ENCODE measurements at regions of chr17 and their contacts with region 1.

Region 1: DNA sequence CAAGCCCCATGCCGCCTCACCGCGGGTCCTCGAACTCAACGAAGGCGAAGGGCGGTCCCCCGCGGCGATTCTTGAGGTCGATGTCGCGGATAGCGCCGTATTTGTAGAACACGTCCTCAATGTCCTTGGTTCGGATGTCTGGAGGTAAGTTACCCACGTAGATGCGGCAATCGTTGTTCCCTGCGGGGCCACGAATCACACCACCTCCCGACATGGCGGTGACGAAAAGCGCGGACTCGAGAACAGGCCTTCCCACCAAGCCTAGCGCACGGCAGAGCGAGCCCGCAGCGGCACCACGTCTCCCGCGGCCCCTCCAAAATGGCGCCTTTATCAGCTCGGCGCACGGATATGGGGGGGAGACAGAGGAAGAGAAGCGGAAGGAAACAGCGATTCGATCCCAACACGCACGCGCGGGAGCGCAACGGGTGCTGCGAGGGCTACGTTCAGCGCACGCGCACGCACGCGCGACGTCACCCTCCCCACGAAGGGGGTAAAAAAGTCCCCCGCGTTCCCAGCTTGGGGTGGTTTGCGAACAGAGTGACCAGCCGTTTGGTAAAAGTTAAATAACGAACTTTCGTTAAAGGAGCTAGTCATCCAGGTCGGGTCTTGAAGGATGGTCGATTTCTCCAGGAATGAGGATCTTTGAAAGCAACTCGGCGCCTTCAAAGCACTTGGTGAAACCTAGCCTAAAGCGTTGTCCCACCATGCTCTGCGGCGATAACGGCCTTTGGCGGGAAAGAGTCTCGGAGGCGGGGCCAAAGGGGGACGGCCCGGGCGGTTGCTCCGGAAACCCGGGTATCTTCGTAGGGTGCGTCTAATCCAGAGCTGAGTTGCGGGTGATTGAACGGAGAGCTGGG is at the start of gene SRSF1:
- DNase-seq: peak; percentile 98 to 99 (median 98)
- ATAC-seq: peak; percentile 95 to 98 (median 96)
- H3K4me3 ChIP-seq: peak within 1 kb of the TSS; percentile 68 to 96 (median 78)
- H3K27ac ChIP-seq: peak within 1 kb of the TSS; percentile 92 to 99 (median 96)
- H3K4me1 ChIP-seq: peaks cover 16 to 49% (median 38%) of the 10 kb centered on the region in 12 donors
- H3K27me3 ChIP-seq: no peaks in the 10 kb centered on the region
- CTCF ChIP-seq: no peak
- POLR2A ChIP-seq: peak; percentile 74 to 92
- total RNA-seq, gene SRSF1: 80.8 to 114 (median 99.7) TPM

Region 2: GRCh38 chr17:57604771-57605674 is 402.1 kb before region 1 on chr17:
- intact Hi-C with region 1: loop called in 1 of 10 experiments (anchors 10 kb)
- DNase-seq: peak in 4 of 5 donors; percentile 57 to 77 (median 63)
- ATAC-seq: peak; percentile 76 to 79 (median 79)
- H3K4me3 ChIP-seq: peak overlapping the region in 8 of 12 donors; percentile 2 to 29 (median 18)
- H3K27ac ChIP-seq: peak overlapping the region; percentile 66 to 95 (median 88)
- H3K4me1 ChIP-seq: peaks cover 3 to 65% (median 37%) of the 10 kb centered on the region in 12 donors
- H3K27me3 ChIP-seq: no peaks in the 10 kb centered on the region
- CTCF ChIP-seq: peak in 2 of 12 donors; percentile 3 to 17
- POLR2A ChIP-seq: no peak